ENCODE measurements at regions of chr9 and their contacts with region 1.

Region 1: DNA sequence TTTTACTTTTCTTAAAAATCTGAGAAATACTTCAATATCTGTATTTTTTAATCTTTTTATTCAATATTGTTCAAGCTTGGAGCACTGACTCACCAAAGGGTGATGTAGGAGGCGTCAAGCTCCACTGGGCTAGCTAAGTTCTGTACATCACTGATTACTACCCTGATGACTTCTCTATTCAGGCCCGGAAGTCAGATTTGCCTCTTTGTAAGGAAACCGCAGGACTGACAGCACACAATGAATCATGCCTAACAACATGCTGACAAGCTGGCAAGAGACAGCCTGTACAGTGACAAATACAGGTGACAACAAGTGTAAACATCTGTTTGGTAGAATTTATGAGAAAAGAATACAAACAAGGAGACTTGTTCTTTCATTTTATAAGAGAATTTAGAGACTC is 627.9 kb upstream of the RORB start:
- H3K4me3 ChIP-seq: no peak overlapping the region
- H3K27ac ChIP-seq: no peak overlapping the region
- H3K4me1 ChIP-seq: no peaks in the 10 kb centered on the region
- CTCF ChIP-seq: no peak

Region 2: DNA sequence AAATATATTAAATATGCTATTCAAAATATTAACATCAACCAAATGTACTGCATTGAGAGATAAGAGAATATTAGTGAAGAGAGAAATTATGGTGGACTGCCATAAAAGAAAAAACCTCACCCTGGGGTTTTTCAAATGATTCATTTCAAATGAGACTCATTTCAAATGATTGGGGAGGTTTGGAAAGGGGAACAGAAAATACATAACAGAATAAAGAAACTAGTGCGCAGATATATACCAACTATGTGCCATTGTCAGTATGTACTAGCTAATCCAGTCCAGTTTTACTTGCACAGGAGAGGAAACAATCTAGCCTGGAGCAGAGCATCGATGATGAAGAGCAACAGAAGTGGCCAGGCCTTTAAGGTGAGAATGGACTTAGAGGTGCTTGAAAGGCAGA is 23.7 kb before region 1 on chr9:
- CTCF ChIA-PET with region 1: interaction called, 11 read pairs
- POLR2A ChIA-PET with region 1: no interaction called
- H3K4me3 ChIP-seq: no peak overlapping the region
- H3K27ac ChIP-seq: no peak overlapping the region
- H3K4me1 ChIP-seq: no peaks in the 10 kb centered on the region
- CTCF ChIP-seq: no peak

Measured in HEK293 (cell line).